A673 (cell line): ENCODE measurements at regions of chr11 and their contacts with region 1.

Region 1: GRCh38 chr11:75577207-75577606 is 15.2 kb downstream of the SERPINH1 start:
- DNase-seq: peak; percentile 58
- H3K4me3 ChIP-seq: no peak overlapping the region
- H3K27ac ChIP-seq: no peak overlapping the region
- H3K4me1 ChIP-seq: peaks cover 2% of the 10 kb centered on the region
- H3K27me3 ChIP-seq: no peaks in the 10 kb centered on the region
- CTCF ChIP-seq: peak; percentile 61

Region 2: GRCh38 chr11:75547580-75548058 is 29.6 kb before region 1 on chr11:
- CTCF ChIA-PET with region 1: no interaction called
- POLR2A ChIA-PET with region 1: no interaction called
- intact Hi-C with region 1: loop called (anchors 1 kb)
- DNase-seq: peak; percentile 65
- H3K4me3 ChIP-seq: no peak overlapping the region
- H3K27ac ChIP-seq: no peak overlapping the region
- H3K4me1 ChIP-seq: no peaks in the 10 kb centered on the region
- H3K27me3 ChIP-seq: no peaks in the 10 kb centered on the region
- CTCF ChIP-seq: peak; percentile 94

Region 3: DNA sequence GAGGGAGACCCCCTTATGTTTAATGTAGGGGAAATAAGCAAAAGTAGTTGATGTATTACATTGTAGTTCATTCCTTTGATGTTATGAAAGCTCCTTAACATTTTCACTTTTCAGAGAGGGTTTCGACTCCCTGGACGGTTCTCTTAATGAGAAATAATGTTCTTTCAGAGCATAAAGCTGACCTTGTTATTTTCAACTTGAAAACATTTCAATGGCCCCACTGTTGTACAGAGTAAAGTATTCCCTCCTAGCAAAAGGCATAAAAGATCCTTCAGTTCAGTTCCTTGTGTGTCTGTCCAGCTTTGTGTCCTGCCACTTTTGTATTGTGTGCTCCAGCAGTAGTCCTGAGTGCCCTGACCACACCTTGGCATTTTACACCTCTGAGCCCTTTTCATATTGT is 301.7 kb after region 1 on chr11:
- CTCF ChIA-PET with region 1: interaction called, 10 read pairs
- POLR2A ChIA-PET with region 1: no interaction called
- intact Hi-C with region 1: no loop called
- DNase-seq: no peak
- H3K4me3 ChIP-seq: no peak overlapping the region
- H3K27ac ChIP-seq: no peak overlapping the region
- H3K4me1 ChIP-seq: no peaks in the 10 kb centered on the region
- H3K27me3 ChIP-seq: no peaks in the 10 kb centered on the region
- CTCF ChIP-seq: no peak